ENCODE measurements at regions of chr14 and their contacts with region 1.

Region 1: DNA sequence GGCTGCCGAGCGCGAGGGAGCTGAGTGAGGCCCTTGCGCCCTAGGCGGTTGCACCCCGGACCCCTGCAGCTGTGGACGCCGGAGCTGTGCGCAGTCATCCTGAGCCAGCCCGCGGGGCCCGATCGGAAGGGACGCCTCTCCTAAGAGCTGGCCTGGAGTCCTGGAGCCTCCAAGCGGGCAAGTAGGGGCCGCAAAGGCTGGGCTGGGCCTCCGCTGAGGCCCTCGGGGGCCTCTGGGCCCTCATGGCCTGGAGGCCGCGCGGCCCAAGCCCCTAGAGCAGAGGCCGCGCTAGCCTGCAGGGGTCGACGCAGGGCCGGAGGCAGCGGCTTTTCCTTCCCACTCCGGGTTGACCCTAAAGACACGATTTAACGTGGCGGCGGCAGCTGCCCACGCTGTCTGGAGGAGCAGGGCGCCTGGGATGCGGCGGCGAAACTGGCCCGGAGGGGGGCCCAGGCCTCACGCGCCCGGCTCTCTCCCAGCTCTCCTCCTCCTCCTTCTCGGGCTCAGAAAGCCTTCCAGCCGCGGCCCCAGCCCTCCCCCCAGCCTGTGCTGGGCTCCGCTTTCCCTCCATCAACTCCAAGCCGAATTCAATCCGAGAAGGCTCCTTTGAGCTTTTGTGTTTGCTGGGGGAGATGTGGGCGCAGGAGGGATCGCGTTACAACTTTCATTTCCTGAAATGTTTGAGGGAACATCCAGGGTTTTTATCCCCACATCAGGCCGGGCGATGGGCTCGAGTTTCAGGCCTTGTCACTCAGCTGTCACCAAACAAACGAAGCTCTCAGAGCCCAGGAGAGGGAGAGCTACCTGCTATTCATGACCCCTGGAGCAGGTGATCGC is 11.6 kb downstream of the SIX1 start:
- DNase-seq: peak in 1 of 2 donors; percentile 40
- ATAC-seq: peak; percentile 37 to 48
- H3K4me3 ChIP-seq: peak overlapping the region; percentile 57 to 69 (median 62)
- H3K27ac ChIP-seq: peak overlapping the region; percentile 93 to 98 (median 95)
- H3K4me1 ChIP-seq: peaks cover 44 to 52% of the 10 kb centered on the region in 2 donors
- H3K27me3 ChIP-seq: no peaks in the 10 kb centered on the region
- CTCF ChIP-seq: peak in 1 of 5 experiments; percentile 13
- POLR2A ChIP-seq: no peak

Region 2: GRCh38 chr14:60495946-60496345 is 141.8 kb before region 1 on chr14:
- in situ Hi-C with region 1: no loop called
- intact Hi-C with region 1: no loop called
- DNase-seq: no peak
- ATAC-seq: no peak
- H3K4me3 ChIP-seq: no peak overlapping the region
- H3K27ac ChIP-seq: no peak overlapping the region
- H3K4me1 ChIP-seq: no peaks in the 10 kb centered on the region
- H3K27me3 ChIP-seq: no peaks in the 10 kb centered on the region
- CTCF ChIP-seq: no peak
- POLR2A ChIP-seq: no peak

Region 3: DNA sequence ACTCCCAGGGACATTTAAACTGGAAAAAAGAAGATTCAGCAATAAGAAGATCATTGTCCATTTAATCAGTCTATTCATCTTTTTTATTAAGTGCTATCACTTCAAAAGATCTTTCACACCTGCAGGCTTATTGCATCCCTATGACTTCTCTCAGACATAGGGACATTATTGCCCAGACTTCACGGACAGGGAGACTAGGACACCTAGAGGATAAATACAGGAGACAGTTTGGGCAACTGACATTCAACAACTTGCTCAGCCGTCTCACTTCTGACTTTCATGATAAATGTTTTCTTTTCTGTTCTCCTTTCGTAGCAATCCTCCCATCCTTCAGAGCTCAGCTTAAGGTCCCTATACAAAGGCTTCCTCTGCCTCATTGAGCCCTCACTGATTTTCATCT is 559.1 kb after region 1 on chr14:
- in situ Hi-C with region 1: no loop called
- intact Hi-C with region 1: loop called (anchors 5 kb)
- DNase-seq: no peak
- ATAC-seq: peak; percentile 74 to 88
- H3K4me3 ChIP-seq: no peak overlapping the region
- H3K27ac ChIP-seq: peak overlapping the region; percentile 55 to 76 (median 62)
- H3K4me1 ChIP-seq: peaks cover 18 to 33% of the 10 kb centered on the region in 2 donors
- H3K27me3 ChIP-seq: no peaks in the 10 kb centered on the region
- CTCF ChIP-seq: peak in 3 of 5 experiments; percentile 40 to 52 (median 40)
- POLR2A ChIP-seq: no peak

Region 4: GRCh38 chr14:61258985-61259384 is 621.3 kb after region 1 on chr14:
- in situ Hi-C with region 1: loop called in 1 of 4 experiments (anchors 10 kb)
- intact Hi-C with region 1: loop called (anchors 5 kb)
- DNase-seq: no peak
- ATAC-seq: no peak
- H3K4me3 ChIP-seq: no peak overlapping the region
- H3K27ac ChIP-seq: peak overlapping the region; percentile 80 to 85 (median 84)
- H3K4me1 ChIP-seq: peaks cover 10 to 32% of the 10 kb centered on the region in 2 donors
- H3K27me3 ChIP-seq: no peaks in the 10 kb centered on the region
- CTCF ChIP-seq: no peak
- POLR2A ChIP-seq: no peak

Region 5: DNA sequence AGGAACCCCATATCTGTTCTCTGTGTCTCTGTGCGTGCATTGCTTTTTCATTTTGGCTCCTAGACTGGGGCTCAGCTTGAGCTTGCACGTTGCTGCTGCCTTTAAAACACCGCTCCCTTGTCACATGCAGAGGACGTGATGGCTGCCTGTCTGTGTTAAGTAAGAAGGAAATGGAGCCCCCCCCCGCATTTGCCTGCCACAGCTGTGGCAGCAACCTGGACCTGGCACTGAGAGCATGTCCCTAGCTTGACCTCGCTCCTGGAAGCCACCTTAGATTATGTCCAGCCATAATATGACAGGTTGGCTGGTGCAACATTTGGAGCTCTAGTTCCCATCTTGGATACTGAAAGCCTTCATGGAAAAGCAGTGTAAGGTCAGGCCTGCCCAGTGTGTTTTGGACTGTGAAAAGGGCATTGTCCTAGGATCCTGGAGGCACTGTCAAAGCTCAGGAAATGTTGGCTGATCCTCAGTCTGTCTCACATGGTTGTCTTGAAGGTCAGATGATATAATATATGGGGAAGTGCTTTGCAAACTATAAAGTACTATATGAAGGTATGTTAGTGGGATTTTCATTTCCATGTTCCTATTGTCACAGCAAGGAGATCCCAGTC is 757.5 kb after region 1 on chr14:
- in situ Hi-C with region 1: no loop called
- intact Hi-C with region 1: no loop called
- DNase-seq: peak; percentile 19 to 70
- ATAC-seq: peak; percentile 39 to 97
- H3K4me3 ChIP-seq: no peak overlapping the region
- H3K27ac ChIP-seq: peak overlapping the region in 2 of 4 donors; percentile 38 to 61
- H3K4me1 ChIP-seq: peaks cover 7 to 16% of the 10 kb centered on the region in 2 donors
- H3K27me3 ChIP-seq: no peaks in the 10 kb centered on the region
- CTCF ChIP-seq: no peak
- POLR2A ChIP-seq: no peak